HepG2 (cell line): ENCODE measurements at regions of chrX and their contacts with region 1.

Region 1: DNA sequence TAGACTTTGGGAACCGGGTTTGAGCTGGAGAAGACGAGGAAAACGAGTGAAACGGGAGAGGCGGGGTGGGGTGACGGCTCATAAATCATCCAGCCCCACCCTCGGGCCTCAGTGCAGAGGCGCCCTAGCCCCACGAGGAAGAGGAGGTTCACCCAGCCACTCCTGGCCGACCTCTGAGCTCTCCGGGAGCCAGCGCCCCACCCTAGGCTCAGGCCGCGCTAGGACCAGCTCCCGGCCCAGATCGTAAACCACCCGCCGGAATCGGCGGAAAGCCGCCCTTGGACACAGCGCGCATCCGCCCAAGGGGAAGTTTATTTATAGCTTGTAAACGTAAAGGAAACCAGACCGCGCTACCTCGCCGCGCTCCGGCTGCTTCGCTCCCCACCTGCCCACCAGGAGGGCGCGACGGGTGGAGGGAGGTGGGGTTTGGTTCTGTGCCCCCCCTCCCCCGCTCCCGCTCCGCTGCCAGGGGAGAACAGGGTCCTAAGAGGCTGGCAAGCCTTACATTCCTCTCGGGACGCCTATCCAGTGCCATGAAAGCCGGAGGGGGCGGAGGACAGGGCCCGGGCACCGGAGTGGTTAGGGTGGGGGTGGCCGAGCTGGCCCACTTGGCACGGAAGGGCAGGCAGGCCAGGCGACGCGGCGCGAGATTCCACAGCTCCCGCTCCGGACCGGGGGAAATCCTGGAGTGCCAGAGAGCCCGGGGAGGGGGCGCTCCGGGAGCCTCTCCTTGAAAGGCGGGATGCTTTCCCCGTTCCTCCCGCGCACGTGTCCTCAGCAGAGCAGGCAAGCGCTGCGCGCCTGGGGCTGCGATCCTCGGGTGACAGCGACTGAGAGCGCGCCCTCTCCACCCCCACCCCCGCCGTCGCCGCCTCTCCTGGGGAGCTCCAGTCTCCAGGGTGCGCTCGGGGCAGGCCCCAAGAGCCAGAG is 84.2 kb downstream of the BCOR start:
- DNase-seq: peak; percentile 67
- ATAC-seq: peak; percentile 73
- H3K4me3 ChIP-seq: peak overlapping the region; percentile 59 to 77 (median 70); a peak in 5 of 6 replicates
- H3K27ac ChIP-seq: peak overlapping the region; percentile 98
- H3K4me1 ChIP-seq: peaks cover 27% of the 10 kb centered on the region
- H3K27me3 ChIP-seq: no peaks in the 10 kb centered on the region
- CTCF ChIP-seq: 0 out of 2 replicates have a peak, but pooled peaks have one; percentile 0
- EP300 ChIP-seq: no peak
- POLR2A ChIP-seq: no peak; a peak in 2 of 4 replicates
- RAD21 ChIP-seq: no peak; the same call in 1 of the 2 replicates

Region 2: GRCh38 chrX:39953883-39954282 is 59.6 kb before region 1 on chrX:
- CTCF ChIA-PET with region 1: no interaction called
- POLR2A ChIA-PET with region 1: interaction called, 8 read pairs
- in situ Hi-C with region 1: no loop called
- intact Hi-C with region 1: loop called (anchors 5 kb)
- DNase-seq: peak; percentile 88
- ATAC-seq: peak; percentile 99
- H3K4me3 ChIP-seq: peak overlapping the region in 1 of 3 experiments; percentile 16; a peak in 1 of 6 replicates
- H3K27ac ChIP-seq: peak overlapping the region; percentile 49
- H3K4me1 ChIP-seq: peaks cover 66% of the 10 kb centered on the region
- H3K27me3 ChIP-seq: no peaks in the 10 kb centered on the region
- CTCF ChIP-seq: no peak; the same call in 1 of the 2 replicates
- EP300 ChIP-seq: peak; percentile 53; a peak in 2 of 4 replicates
- POLR2A ChIP-seq: no peak
- RAD21 ChIP-seq: no peak

Region 3: GRCh38 chrX:39992300-39992699 is 21.2 kb before region 1 on chrX:
- CTCF ChIA-PET with region 1: no interaction called
- POLR2A ChIA-PET with region 1: interaction called, 24 read pairs
- in situ Hi-C with region 1: no loop called
- intact Hi-C with region 1: no loop called
- DNase-seq: peak; percentile 73
- ATAC-seq: peak; percentile 93
- H3K4me3 ChIP-seq: peak overlapping the region in 1 of 3 experiments; percentile 3; a peak in 2 of 6 replicates
- H3K27ac ChIP-seq: peak overlapping the region; percentile 80
- H3K4me1 ChIP-seq: peaks cover 57% of the 10 kb centered on the region
- H3K27me3 ChIP-seq: no peaks in the 10 kb centered on the region
- CTCF ChIP-seq: no peak
- EP300 ChIP-seq: peak in 1 of 2 experiments; percentile 43; a peak in 1 of 4 replicates
- POLR2A ChIP-seq: no peak
- RAD21 ChIP-seq: no peak

Region 4: DNA sequence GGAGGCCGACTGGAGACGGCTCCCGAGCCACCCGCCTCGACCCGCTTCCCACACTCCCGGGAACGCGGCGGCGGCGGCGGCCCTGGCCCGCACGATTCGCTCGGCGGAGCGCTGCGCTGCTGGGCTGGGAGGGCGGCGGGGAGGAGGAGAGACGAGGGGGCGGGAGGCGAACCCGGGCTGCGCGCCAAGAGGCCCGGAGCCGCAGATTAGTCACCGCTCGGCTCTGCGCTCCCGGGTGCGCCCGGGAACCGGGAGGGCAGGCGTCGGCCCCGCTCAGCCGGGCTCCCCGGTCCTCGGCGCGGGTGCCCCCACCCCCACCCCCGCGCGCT is 95.4 kb after region 1 on chrX:
- CTCF ChIA-PET with region 1: no interaction called
- POLR2A ChIA-PET with region 1: interaction called, 19 read pairs
- in situ Hi-C with region 1: no loop called
- intact Hi-C with region 1: no loop called
- DNase-seq: no peak
- ATAC-seq: peak; percentile 59
- H3K4me3 ChIP-seq: peak overlapping the region; percentile 53 to 76 (median 60); a peak in 5 of 6 replicates
- H3K27ac ChIP-seq: peak overlapping the region; percentile 97
- H3K4me1 ChIP-seq: peaks cover 21% of the 10 kb centered on the region
- H3K27me3 ChIP-seq: no peaks in the 10 kb centered on the region
- CTCF ChIP-seq: no peak
- EP300 ChIP-seq: no peak
- POLR2A ChIP-seq: no peak
- RAD21 ChIP-seq: no peak

Region 5: GRCh38 chrX:40175511-40176350 is 162.2 kb after region 1 on chrX:
- CTCF ChIA-PET with region 1: no interaction called
- POLR2A ChIA-PET with region 1: interaction called, 34 read pairs
- in situ Hi-C with region 1: no loop called
- intact Hi-C with region 1: no loop called
- DNase-seq: peak; percentile 47
- ATAC-seq: peak; percentile 39
- H3K4me3 ChIP-seq: peak overlapping the region; percentile 55 to 74 (median 64); a peak in 5 of 6 replicates
- H3K27ac ChIP-seq: peak overlapping the region; percentile 95
- H3K4me1 ChIP-seq: peaks cover 46% of the 10 kb centered on the region
- H3K27me3 ChIP-seq: no peaks in the 10 kb centered on the region
- CTCF ChIP-seq: 0 out of 2 replicates have a peak, but pooled peaks have one; percentile 5
- EP300 ChIP-seq: no peak
- POLR2A ChIP-seq: peak in 1 of 2 experiments; percentile 19; a peak in 2 of 4 replicates
- RAD21 ChIP-seq: no peak